Sciatic nerve (tissue), 2 donors: ENCODE measurements at regions of chr11 and their contacts with region 1.

Region 1: GRCh38 chr11:80486678-80487077 is 1045.8 kb upstream of the TENM4 start:
- DNase-seq: no peak
- ATAC-seq: no peak

Region 2: DNA sequence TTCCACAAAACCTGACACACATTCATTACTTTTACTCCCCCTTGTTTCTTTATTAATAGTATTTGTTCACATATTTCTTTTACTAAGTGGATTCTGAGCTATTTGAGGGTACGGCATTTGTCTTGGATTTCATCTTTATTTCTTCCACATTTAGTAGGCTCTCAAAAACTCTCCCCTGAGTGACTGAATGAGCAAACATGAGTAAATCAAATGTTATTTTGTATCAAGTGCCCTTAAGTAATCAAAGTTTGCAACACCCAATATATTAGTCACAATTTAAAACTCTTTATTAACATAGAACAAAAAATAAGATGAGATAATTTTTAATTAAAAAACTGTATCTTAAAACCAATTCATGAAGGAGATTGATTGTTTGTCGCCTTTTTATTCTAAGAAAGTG is 56.0 kb after region 1 on chr11:
- intact Hi-C with region 1: loop called (anchors 10 kb)
- DNase-seq: no peak
- ATAC-seq: no peak